Activated CD4-positive, alpha-beta T cell treated with anti-CD3 and anti-CD28 coated beads for 36 hours (primary cell): ENCODE measurements at regions of chr21 and their contacts with region 1.

Region 1: GRCh38 chr21:43600642-43601402 is 58.5 kb downstream of the HSF2BP start:
- DNase-seq: no peak
- ATAC-seq: no peak
- H3K4me3 Mint-ChIP-seq: no peak overlapping the region
- H3K27ac Mint-ChIP-seq: no peak overlapping the region
- H3K4me1 Mint-ChIP-seq: peaks cover 2% of the 10 kb centered on the region
- H3K27me3 Mint-ChIP-seq: no peaks in the 10 kb centered on the region

Region 2: DNA sequence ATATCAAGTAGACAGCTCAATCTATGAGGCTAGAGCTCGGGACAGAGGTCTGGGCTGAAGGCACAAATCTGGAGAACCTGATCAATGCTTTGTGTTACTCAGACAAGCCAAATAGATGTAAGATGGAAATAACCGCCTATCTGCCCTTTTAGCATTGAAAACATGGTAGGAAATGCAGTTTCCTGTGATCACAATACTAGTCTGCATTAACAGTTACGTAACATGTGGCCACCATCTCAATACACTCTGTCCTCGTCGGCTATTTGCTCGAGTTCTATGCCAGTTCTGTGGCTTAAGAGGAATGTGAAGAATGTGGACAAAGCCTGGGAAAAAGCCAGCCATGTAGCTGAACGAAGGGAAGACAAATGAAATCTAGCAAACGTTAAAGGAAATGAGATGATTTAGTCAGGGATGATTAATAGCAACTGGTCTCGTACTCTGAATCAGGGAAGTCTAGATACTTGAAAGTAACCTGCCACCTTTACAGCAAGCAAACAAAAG is 14.8 kb before region 1 on chr21:
- CTCF ChIA-PET with region 1: no interaction called
- POLR2A ChIA-PET with region 1: no interaction called
- intact Hi-C with region 1: loop called in 1 of 2 experiments (anchors 2 kb)
- DNase-seq: no peak
- ATAC-seq: peak; percentile 33
- H3K4me3 Mint-ChIP-seq: no peak overlapping the region
- H3K27ac Mint-ChIP-seq: no peak overlapping the region
- H3K4me1 Mint-ChIP-seq: peaks cover 4% of the 10 kb centered on the region
- H3K27me3 Mint-ChIP-seq: no peaks in the 10 kb centered on the region

Region 3: DNA sequence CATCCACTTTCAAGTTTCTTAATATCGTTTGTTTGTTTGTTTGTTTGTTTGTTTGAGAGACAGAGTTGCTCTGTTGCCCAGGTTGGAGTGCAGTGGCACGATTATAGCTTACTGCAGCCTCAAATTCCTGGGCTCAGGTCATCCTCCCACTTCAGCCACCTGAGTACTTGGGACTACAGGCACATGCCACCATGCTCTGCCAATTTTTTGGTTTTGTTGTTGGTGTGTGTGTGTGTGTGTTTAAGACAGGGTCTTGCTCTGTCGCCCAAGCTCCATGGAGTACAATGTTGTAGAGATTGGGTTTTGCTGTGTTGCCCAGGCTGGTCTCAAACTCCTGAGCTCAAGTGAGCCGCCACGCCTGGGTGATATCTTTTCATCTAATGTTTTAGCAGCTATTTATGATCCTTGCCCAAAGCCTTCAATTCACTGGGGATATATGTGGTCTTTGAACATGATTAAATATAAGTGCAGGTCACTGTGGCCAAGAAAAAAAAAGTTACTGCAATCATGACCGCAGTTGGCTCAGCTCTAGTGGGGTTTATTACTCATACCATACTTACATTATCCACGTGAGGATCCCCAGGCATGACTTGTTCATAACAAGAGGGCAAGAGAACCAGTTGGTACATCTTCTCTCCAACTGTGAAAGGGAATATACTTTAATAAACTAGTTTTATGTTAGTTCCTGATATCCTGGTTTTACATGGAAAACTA is 66.5 kb after region 1 on chr21:
- CTCF ChIA-PET with region 1: no interaction called
- POLR2A ChIA-PET with region 1: no interaction called
- intact Hi-C with region 1: no loop called
- DNase-seq: peak; percentile 42
- ATAC-seq: peak; percentile 85
- H3K4me3 Mint-ChIP-seq: no peak overlapping the region
- H3K27ac Mint-ChIP-seq: peak overlapping the region; percentile 44
- H3K4me1 Mint-ChIP-seq: peaks cover 34% of the 10 kb centered on the region
- H3K27me3 Mint-ChIP-seq: no peaks in the 10 kb centered on the region